ENCODE measurements at regions of chr15 and their contacts with region 1.

Region 1: DNA sequence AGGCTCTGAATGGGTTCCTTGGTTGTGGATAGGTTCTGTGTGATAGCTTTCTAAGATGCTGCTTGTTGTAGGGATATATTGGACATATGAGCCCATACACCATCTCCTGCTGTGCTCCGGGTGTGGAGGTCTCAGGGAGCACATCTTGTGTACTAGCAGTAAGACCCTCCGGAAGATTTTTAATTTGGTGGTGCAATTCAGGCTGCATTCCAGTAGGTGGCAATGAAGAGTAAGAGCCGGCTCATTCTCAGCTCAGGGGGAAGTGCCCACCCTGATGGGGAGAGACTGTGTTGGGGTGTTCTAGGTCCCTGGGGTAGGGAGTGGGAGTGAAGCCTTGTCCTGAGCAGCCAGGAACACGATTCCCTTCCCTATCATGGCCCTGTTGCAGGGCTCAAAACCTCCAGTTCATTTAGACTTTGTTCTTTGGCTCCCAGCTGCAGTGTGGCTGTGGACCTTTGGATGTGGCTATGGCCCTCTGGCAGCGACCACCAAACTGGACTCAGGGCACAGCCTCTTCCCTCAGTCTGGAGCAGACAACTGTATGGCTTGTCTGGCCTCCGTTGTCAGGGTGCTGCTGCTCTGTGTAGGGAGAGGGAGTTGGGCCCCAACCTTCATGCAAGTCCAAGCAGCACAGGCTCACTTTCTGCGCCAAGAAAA is 104.7 kb downstream of the UNC13C start:
- DNase-seq: peak; percentile 53
- ATAC-seq: peak; percentile 94
- H3K4me3 Mint-ChIP-seq: no peak overlapping the region
- H3K27ac Mint-ChIP-seq: no peak overlapping the region
- H3K4me1 Mint-ChIP-seq: no peaks in the 10 kb centered on the region
- H3K27me3 Mint-ChIP-seq: no peaks in the 10 kb centered on the region
- CTCF ChIP-seq: peak; percentile 84

Region 2: DNA sequence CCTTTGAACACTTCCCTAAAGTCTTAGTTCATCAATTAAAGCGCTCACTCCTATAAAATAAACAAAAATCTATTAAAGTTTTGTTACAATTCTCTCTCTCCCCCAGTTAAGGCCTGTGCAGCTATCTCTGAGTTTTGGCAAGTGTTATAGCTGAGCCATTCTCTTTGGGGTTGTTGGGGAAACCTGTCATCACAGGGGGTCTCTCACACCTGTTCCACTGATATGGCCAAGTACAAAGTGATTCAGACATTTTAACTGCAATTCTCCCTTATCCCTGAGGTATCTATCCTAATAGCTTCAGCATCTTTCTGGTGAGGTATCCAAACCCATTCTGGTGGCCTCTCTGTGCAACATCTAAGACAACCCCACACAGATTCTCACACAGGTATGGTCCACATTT is 11.7 kb after region 1 on chr15:
- CTCF ChIA-PET with region 1: interaction called, 18 read pairs
- POLR2A ChIA-PET with region 1: no interaction called
- DNase-seq: no peak
- ATAC-seq: no peak
- H3K4me3 Mint-ChIP-seq: no peak overlapping the region
- H3K27ac Mint-ChIP-seq: no peak overlapping the region
- H3K4me1 Mint-ChIP-seq: no peaks in the 10 kb centered on the region
- H3K27me3 Mint-ChIP-seq: no peaks in the 10 kb centered on the region
- CTCF ChIP-seq: no peak

Region 3: DNA sequence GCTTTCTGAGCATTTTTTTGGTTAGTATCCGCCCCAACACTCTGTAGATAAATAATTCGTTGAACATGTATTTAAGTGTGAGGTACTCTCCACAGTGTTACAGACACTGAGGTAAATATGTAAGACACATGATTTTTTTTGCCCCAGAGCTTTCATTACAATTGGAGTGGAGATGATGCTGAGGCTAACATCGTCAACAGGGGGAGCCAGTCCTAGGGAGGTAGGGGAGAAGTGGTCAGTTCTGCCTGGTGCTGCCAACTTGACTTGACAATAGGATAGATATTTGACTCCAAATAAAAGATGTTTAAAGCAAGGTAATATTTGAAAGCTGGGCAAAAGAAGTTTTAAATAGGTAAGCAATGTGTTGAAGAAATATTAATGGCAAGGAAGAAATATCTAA is 191.0 kb after region 1 on chr15:
- CTCF ChIA-PET with region 1: no interaction called
- POLR2A ChIA-PET with region 1: no interaction called
- DNase-seq: peak; percentile 38
- ATAC-seq: peak; percentile 84
- H3K4me3 Mint-ChIP-seq: no peak overlapping the region
- H3K27ac Mint-ChIP-seq: no peak overlapping the region
- H3K4me1 Mint-ChIP-seq: no peaks in the 10 kb centered on the region
- H3K27me3 Mint-ChIP-seq: no peaks in the 10 kb centered on the region
- CTCF ChIP-seq: no peak